Ovary (tissue), 10 donors: ENCODE measurements at regions of chr6 and their contacts with region 1.

Region 1: DNA sequence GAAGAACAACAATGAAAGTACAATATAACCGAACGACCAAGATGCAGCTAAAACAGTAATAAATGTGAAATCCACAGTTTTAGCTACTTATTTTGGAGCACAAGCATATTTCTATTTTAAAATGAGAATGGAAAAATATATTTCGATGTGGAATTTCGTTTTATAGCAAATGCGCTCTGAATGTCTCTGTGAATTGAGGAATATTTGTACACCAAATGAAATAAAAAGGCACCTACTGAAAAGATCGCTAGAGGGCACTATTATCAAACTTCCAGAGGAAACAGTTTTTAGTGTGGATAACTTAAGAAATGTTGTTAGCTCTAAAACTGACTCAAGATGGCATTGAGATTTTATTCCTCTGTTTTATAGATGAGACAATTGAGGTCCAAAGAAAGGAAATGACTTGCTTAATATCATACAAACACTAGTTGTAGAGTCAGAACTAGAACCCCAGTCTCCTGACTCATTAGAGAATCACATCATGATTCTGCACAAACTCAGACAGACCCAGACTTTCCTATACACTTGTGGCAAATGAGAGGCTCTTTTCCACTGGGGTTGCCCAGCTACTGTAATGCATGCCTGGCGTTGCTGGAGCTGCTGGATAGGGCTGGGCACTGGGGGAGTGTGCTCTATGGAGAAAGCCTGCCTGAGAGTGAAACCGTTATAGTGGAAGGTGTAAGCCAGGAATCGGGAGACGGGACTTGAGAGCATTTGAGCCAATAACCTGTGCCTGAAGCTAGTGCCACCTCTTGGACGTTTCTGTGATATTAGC is 51.9 kb downstream of the GCLC start:
- DNase-seq: peak in 1 of 5 donors; percentile 22
- H3K4me3 ChIP-seq: no peak overlapping the region
- H3K27ac ChIP-seq: no peak overlapping the region
- H3K4me1 ChIP-seq: peaks cover 2% of the 10 kb centered on the region
- H3K27me3 ChIP-seq: no peaks in the 10 kb centered on the region
- CTCF ChIP-seq: peak; percentile 52 to 68 (median 59)
- EP300 ChIP-seq: no peak
- POLR2A ChIP-seq: no peak

Region 2: GRCh38 chr6:53544470-53545308 is 51.6 kb after region 1 on chr6 and contains the start of gene GCLC:
- intact Hi-C with region 1: loop called in 1 of 4 experiments (anchors 10 kb)
- DNase-seq: peak; percentile 93 to 96 (median 94)
- H3K4me3 ChIP-seq: peak within 1 kb of the TSS; percentile 81
- H3K27ac ChIP-seq: peak within 1 kb of the TSS; percentile 67 to 89
- H3K4me1 ChIP-seq: peaks cover 3% of the 10 kb centered on the region
- H3K27me3 ChIP-seq: no peaks in the 10 kb centered on the region
- CTCF ChIP-seq: peak; percentile 35 to 78 (median 66)
- EP300 ChIP-seq: no peak
- POLR2A ChIP-seq: peak; percentile 91
- total RNA-seq, gene GCLC: 17.8 to 42.8 (median 29.4) TPM

Region 3: GRCh38 chr6:53651764-53652401 is 158.8 kb after region 1 on chr6:
- intact Hi-C with region 1: loop called in 1 of 4 experiments (anchors 2 kb)
- DNase-seq: peak; percentile 38 to 68 (median 52)
- H3K4me3 ChIP-seq: peak overlapping the region; percentile 47
- H3K27ac ChIP-seq: no peak overlapping the region
- H3K4me1 ChIP-seq: peaks cover 7% of the 10 kb centered on the region
- H3K27me3 ChIP-seq: no peaks in the 10 kb centered on the region
- CTCF ChIP-seq: peak in 1 of 3 donors; percentile 16
- EP300 ChIP-seq: no peak
- POLR2A ChIP-seq: no peak

Region 4: GRCh38 chr6:53664623-53665022 is 171.6 kb after region 1 on chr6:
- intact Hi-C with region 1: loop called in 1 of 4 experiments (anchors 10 kb)
- DNase-seq: no peak
- H3K4me3 ChIP-seq: no peak overlapping the region
- H3K27ac ChIP-seq: no peak overlapping the region
- H3K4me1 ChIP-seq: peaks cover 3% of the 10 kb centered on the region
- H3K27me3 ChIP-seq: no peaks in the 10 kb centered on the region
- CTCF ChIP-seq: no peak
- EP300 ChIP-seq: no peak
- POLR2A ChIP-seq: no peak

Region 5: GRCh38 chr6:53725791-53726431 is 232.9 kb after region 1 on chr6:
- intact Hi-C with region 1: loop called in 3 of 4 experiments (anchors 5 to 10 kb)
- DNase-seq: peak; percentile 61 to 87 (median 78)
- H3K4me3 ChIP-seq: no peak overlapping the region
- H3K27ac ChIP-seq: no peak overlapping the region
- H3K4me1 ChIP-seq: peaks cover 2% of the 10 kb centered on the region
- H3K27me3 ChIP-seq: no peaks in the 10 kb centered on the region
- CTCF ChIP-seq: peak; percentile 58 to 71 (median 71)
- EP300 ChIP-seq: no peak
- POLR2A ChIP-seq: no peak